Left colon (tissue), 2 donors: ENCODE measurements at regions of chr13 and their contacts with region 1.

Region 1: GRCh38 chr13:23018143-23018542 is 162.6 kb upstream of the SGCG start:
- DNase-seq: no peak
- ATAC-seq: no peak

Region 2: DNA sequence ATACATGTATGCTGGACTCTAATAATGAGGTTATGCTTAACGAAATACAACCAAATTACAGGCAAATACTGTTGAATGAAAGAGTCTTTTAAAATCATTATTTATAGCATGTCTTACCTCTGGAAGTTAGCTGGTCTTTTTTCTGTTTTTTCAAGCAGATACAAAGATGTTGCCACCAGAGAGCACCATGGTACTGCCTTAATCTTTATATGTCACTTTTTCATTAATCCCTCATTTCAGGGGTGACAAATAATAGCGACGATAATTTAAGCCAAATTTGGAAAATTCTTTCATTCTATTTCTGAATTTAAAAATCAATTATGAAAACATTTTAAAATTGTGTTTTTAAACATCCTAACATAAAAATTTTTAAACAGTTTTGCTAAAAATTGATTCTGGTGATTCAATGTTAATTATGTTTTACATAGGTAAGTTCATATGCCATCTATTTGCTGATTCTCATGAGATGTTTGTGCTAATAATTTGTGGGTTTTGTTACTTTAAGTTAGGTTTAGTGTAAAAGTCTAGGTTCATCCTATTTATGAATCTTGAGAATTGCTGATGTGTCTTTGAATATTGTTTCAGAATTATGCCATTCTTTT is 216.6 kb before region 1 on chr13:
- intact Hi-C with region 1: loop called in 1 of 2 experiments (anchors 5 kb)
- DNase-seq: no peak
- ATAC-seq: no peak

Region 3: GRCh38 chr13:22944378-22944777 is 73.8 kb before region 1 on chr13:
- intact Hi-C with region 1: no loop called
- DNase-seq: no peak
- ATAC-seq: no peak